ENCODE measurements at regions of chr2 and their contacts with region 1.

Region 1: DNA sequence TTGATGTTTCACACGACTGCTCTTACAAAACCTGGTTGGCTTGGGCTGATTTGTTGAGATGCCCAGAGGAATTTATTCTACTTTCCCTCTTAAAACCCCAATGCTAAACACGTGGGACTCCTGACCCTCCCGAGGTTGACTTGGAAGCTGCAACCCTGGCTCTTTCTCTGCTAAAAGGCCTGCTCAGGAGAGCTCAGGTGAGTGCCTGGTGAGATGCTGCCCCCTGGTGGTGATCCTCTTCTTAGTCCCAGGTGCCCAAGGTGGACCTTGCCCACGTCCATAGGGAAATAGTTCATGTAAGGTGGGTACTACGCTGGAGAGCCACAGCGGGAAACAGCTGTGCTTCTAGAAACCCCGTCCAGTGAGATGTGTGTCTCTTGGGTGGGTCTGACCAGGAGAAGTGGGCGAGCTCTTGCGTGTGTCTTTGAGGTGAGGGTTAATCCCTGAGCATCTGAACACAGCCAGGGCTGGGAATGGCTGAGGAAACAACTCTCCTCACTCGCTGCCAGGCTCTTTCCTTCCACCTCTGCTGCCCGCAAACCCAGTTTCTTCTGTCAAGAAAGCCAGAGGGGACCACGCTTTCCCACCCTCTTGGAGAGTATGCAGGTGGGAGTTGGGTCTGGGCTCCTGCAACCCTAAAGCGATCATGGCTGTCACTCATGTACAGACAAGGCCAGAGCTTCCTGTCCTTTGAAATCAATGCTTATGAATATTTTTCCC is 25.5 kb upstream of the PXDN start:
- DNase-seq: no peak
- H3K4me3 ChIP-seq: no peak overlapping the region
- H3K27me3 ChIP-seq: peaks cover 1% of the 10 kb centered on the region; the same call in 1 of the 2 replicates
- CTCF ChIP-seq: peak; percentile 80

Region 2: GRCh38 chr2:1750933-1751766 is 18.7 kb before region 1 on chr2:
- CTCF ChIA-PET with region 1: interaction called, 28 read pairs
- POLR2A ChIA-PET with region 1: no interaction called
- DNase-seq: no peak
- H3K4me3 ChIP-seq: no peak overlapping the region
- H3K27me3 ChIP-seq: no peaks in the 10 kb centered on the region
- CTCF ChIP-seq: peak; percentile 98

Region 3: GRCh38 chr2:1758774-1759610 is 10.9 kb before region 1 on chr2:
- CTCF ChIA-PET with region 1: interaction called, 38 read pairs
- POLR2A ChIA-PET with region 1: no interaction called
- DNase-seq: no peak
- H3K4me3 ChIP-seq: no peak overlapping the region
- H3K27me3 ChIP-seq: no peaks in the 10 kb centered on the region
- CTCF ChIP-seq: no peak

Region 4: GRCh38 chr2:1781271-1782080 is 11.6 kb after region 1 on chr2:
- CTCF ChIA-PET with region 1: interaction called, 20 read pairs
- POLR2A ChIA-PET with region 1: no interaction called
- DNase-seq: no peak
- H3K4me3 ChIP-seq: no peak overlapping the region
- H3K27me3 ChIP-seq: peaks cover 3% of the 10 kb centered on the region; the same call in 1 of the 2 replicates
- CTCF ChIP-seq: no peak

Region 5: DNA sequence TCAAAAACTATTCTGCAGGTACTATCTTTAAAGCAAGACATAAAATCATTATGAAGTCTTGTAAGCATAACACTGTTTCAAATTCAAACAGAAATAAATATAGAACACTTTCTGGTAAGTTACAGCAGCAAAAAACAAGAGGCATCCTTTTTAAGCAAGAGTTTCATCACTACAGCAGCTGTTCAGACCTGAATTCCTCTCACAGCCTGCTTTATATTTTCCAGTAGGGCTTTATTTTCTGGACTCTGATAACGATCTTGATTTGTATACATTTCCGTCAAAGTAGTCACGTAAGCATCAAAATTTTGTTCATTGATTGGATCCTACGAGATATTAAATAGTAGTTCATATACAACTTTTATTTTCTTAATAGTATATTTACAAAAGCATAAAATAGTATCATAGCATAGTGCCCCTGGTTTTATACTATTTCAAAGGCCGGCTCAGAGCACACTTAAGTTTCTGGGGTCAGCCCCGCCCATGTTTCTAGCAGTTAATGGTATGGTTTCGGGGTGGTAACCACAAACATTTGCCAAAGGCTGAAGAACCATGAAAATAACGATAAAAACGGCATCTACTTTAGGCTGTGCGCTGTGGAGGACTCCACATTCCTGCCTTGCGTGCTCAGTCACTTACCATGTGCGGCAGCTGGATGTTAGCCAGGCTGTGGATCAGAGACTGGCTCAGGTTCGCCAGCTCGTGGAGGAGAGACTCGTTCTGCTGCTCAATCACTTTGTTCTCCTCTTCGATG is 22.0 kb after region 1 on chr2:
- CTCF ChIA-PET with region 1: interaction called, 13 read pairs
- POLR2A ChIA-PET with region 1: no interaction called
- DNase-seq: peak; percentile 75
- H3K4me3 ChIP-seq: no peak overlapping the region
- H3K27me3 ChIP-seq: no peaks in the 10 kb centered on the region
- CTCF ChIP-seq: no peak

Region 6: DNA sequence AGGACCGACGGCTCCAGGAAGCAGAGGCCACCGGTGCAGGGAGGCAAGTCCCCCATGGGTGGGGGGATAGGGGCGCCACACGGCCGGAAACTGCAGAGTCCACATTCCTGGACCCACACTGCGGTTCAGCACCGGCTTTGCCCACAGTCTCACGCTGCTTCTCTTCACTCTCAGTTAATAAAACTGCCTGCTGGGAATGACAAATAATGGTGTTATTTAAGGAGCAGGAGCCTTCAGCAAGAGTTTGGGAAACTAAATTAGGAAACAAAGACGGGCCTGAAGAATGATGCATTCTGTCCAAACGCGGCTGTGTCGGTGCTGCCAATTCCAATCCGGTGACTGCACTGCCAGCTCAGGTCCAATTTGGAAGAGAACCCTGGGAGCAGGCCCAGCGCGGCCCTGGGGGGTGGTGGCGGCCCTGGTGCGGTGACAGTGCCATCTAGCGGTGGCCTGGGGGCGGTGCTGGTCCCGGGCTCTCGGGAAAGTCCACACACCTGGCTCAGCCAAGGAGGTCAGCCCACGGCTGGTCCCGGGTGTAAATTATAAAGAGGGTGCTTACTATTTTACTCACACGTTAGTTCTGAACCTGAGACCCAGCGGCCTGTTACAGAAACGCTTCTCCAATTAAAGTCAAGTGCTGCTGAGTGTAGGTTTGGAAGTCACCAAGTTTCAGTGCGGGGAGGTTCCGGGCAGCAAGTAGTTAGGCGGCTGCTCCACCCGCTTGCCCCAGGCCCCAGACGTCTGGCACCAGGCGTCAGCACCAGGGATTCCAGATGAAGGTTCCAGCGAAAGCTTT is 47.6 kb after region 1 on chr2:
- CTCF ChIA-PET with region 1: interaction called, 16 read pairs
- POLR2A ChIA-PET with region 1: no interaction called
- DNase-seq: peak; percentile 97
- H3K4me3 ChIP-seq: no peak overlapping the region
- H3K27me3 ChIP-seq: no peaks in the 10 kb centered on the region
- CTCF ChIP-seq: peak; percentile 99

Region 7: GRCh38 chr2:1854729-1855547 is 85.1 kb after region 1 on chr2:
- CTCF ChIA-PET with region 1: no interaction called
- POLR2A ChIA-PET with region 1: no interaction called
- DNase-seq: no peak
- H3K4me3 ChIP-seq: no peak overlapping the region
- H3K27me3 ChIP-seq: peaks cover 3% of the 10 kb centered on the region
- CTCF ChIP-seq: peak; percentile 24

Measured in BJ (cell line).